Right lobe of liver (tissue), 6 donors: ENCODE measurements at regions of chr17 and their contacts with region 1.

Region 1: DNA sequence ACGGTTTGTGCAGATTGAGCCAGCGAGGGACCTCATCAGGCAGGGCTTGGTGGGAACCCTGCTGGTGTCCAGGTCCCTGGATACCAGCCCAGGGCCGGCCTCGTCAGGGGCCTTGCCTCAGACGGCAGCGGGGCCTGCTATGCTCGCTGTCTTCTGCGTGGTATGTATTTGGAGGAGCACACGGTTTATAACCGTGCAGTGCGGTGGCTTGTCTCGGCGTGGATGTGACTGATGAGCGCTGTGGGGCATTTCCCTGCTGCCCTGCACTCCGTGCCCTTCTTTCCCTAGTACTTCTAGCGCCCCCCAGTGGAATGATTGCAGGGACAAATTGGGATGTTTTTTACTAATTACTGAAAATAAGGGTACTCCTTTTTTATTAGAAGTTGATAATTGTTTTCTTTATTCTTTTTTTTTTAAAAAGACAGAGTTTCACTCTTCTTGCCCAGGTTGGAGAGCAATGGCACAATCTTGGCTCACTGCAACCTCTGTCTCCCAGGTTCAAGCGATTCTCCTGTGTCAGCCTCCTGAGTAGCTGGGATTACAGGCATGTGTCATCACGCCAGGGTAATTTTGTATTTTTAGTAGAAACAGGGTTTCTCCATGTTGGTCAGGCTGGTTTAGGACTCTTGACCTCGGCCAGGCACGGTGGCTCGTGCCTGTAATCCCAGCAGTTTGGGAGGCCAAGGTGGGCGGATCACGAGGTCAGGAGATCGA is 15.3 kb downstream of the TBCD start:
- DNase-seq: peak; percentile 61 to 77 (median 66)
- ATAC-seq: peak; percentile 66 to 74 (median 69)
- H3K4me3 ChIP-seq: no peak overlapping the region
- H3K27ac ChIP-seq: no peak overlapping the region
- H3K4me1 ChIP-seq: peaks cover 0 to 15% (median 6%) of the 10 kb centered on the region in 4 donors
- H3K27me3 ChIP-seq: no peaks in the 10 kb centered on the region
- CTCF ChIP-seq: peak; percentile 53 to 74 (median 67)
- POLR2A ChIP-seq: no peak

Region 2: GRCh38 chr17:82623707-82624106 is 143.5 kb before region 1 on chr17:
- intact Hi-C with region 1: no loop called
- DNase-seq: no peak
- ATAC-seq: no peak
- H3K4me3 ChIP-seq: no peak overlapping the region
- H3K27ac ChIP-seq: no peak overlapping the region
- H3K4me1 ChIP-seq: no peaks in the 10 kb centered on the region
- H3K27me3 ChIP-seq: no peaks in the 10 kb centered on the region
- CTCF ChIP-seq: no peak
- POLR2A ChIP-seq: no peak

Region 3: DNA sequence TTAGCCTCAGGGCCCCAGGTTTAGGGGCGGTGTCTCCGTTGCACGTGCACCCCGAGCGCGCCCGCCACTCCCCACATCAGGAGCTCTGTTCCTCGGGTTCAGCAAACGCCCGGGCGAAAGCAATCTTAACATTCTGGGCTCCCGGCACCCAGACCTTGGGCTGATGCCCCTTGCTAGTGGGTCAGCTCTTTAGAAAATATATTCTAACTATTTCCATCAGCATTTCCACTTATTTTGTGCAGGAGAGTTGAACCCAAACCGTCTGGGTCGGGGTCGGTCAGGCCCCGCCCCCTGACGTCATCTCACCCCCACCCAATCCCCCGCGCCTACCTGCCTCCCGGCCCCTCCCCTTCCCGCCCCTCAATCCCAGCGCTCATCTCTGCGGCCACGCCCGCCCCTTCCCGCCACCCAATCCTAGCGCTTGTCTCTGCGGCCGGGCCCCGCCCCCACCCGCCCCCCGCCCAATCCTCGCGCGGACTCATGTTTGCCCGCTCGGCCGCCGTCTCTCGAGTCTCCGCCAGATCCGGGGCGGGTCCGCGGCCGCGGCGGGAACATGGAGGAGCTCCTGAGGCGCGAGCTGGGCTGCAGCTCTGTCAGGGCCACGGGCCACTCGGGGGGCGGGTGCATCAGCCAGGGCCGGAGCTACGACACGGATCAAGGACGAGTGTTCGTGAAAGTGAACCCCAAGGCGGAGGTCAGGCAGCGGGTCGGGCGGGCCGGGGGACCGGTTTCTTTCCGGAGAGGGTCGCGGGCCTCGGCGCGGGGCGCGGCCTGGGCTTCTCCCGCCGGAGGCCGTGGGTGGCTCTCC is 50.8 kb before region 1 on chr17 and contains the start of gene FN3KRP:
- intact Hi-C with region 1: loop called in 1 of 2 experiments (anchors 10 kb)
- DNase-seq: peak; percentile 92 to 96 (median 93)
- ATAC-seq: peak; percentile 87 to 96 (median 90)
- H3K4me3 ChIP-seq: peak within 1 kb of the TSS; percentile 84 to 96 (median 95)
- H3K27ac ChIP-seq: peak within 1 kb of the TSS in 2 of 3 donors; percentile 77 to 92
- H3K4me1 ChIP-seq: peaks cover 0 to 16% (median 0%) of the 10 kb centered on the region in 4 donors
- H3K27me3 ChIP-seq: no peaks in the 10 kb centered on the region
- CTCF ChIP-seq: no peak
- POLR2A ChIP-seq: peak; percentile 49
- total RNA-seq, gene FN3KRP: 7.6 to 24.8 (median 14.3) TPM